ENCODE measurements at regions of chr18 and their contacts with region 1.

Region 1: GRCh38 chr18:59249205-59249774 is 24.0 kb downstream of the RAX start:
- DNase-seq: peak; percentile 60
- H3K4me3 Mint-ChIP-seq: no peak overlapping the region
- H3K27ac Mint-ChIP-seq: no peak overlapping the region
- H3K4me1 Mint-ChIP-seq: no peaks in the 10 kb centered on the region
- H3K27me3 Mint-ChIP-seq: peaks cover 76% of the 10 kb centered on the region
- CTCF ChIP-seq: peak; percentile 93

Region 2: DNA sequence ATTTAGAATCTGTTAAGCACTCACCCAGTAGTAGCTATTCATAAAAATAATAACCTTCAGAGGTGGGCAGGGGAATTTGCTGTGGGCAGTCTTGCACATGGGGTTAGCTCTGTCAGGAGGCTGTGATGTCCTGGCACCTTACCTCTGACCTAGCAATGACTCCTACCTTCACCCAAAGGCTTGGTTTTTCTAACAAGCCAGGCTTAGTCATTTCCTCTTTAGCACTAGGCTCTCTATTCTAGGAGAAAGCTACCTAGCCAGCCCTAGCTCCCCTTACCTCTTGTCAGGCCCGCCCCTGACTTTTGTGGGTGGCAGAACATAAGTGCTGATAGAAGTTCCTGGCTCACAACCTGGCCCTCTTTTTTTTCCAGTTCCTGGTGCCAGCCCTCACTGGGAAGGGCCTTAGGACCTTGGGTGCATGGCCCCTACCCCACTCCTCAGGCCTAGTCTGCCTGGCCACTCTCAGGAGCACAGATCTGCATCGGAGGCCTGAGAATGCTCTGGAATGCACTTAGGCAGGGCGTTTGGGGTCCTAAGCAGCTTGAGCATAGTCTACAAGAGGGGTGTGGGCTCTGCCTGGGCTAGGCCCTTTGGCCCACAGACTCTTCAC is 51.5 kb after region 1 on chr18:
- CTCF ChIA-PET with region 1: interaction called, 12 read pairs
- POLR2A ChIA-PET with region 1: no interaction called
- intact Hi-C with region 1: no loop called
- DNase-seq: peak; percentile 45
- H3K4me3 Mint-ChIP-seq: no peak overlapping the region
- H3K27ac Mint-ChIP-seq: no peak overlapping the region
- H3K4me1 Mint-ChIP-seq: no peaks in the 10 kb centered on the region
- H3K27me3 Mint-ChIP-seq: peaks cover 20% of the 10 kb centered on the region
- CTCF ChIP-seq: no peak

Region 3: GRCh38 chr18:59308248-59308937 is 59.1 kb after region 1 on chr18:
- CTCF ChIA-PET with region 1: interaction called, 28 read pairs
- POLR2A ChIA-PET with region 1: interaction called, 3 read pairs
- intact Hi-C with region 1: loop called (anchors 1 kb)
- DNase-seq: peak; percentile 72
- H3K4me3 Mint-ChIP-seq: peak overlapping the region; percentile 28
- H3K27ac Mint-ChIP-seq: no peak overlapping the region
- H3K4me1 Mint-ChIP-seq: no peaks in the 10 kb centered on the region
- H3K27me3 Mint-ChIP-seq: peaks cover 30% of the 10 kb centered on the region
- CTCF ChIP-seq: peak; percentile 77

Region 4: GRCh38 chr18:59395226-59396110 is 146.2 kb after region 1 on chr18:
- CTCF ChIA-PET with region 1: interaction called, 171 read pairs
- POLR2A ChIA-PET with region 1: no interaction called
- intact Hi-C with region 1: no loop called
- DNase-seq: no peak
- H3K4me3 Mint-ChIP-seq: no peak overlapping the region
- H3K27ac Mint-ChIP-seq: no peak overlapping the region
- H3K4me1 Mint-ChIP-seq: no peaks in the 10 kb centered on the region
- H3K27me3 Mint-ChIP-seq: peaks cover 26% of the 10 kb centered on the region
- CTCF ChIP-seq: no peak

Measured in MCF 10A (cell line).